Psoas muscle (tissue), 8 donors: ENCODE measurements at regions of chr7 and their contacts with region 1.

Region 1: GRCh38 chr7:151123822-151124464 is 37.7 kb downstream of the AGAP3 start:
- DNase-seq: peak; percentile 83 to 91
- ATAC-seq: peak; percentile 83 to 92 (median 88)
- H3K4me3 ChIP-seq: no peak overlapping the region
- H3K27ac ChIP-seq: no peak overlapping the region
- H3K4me1 ChIP-seq: peaks cover 20% of the 10 kb centered on the region
- H3K27me3 ChIP-seq: no peaks in the 10 kb centered on the region
- CTCF ChIP-seq: peak; percentile 99

Region 2: DNA sequence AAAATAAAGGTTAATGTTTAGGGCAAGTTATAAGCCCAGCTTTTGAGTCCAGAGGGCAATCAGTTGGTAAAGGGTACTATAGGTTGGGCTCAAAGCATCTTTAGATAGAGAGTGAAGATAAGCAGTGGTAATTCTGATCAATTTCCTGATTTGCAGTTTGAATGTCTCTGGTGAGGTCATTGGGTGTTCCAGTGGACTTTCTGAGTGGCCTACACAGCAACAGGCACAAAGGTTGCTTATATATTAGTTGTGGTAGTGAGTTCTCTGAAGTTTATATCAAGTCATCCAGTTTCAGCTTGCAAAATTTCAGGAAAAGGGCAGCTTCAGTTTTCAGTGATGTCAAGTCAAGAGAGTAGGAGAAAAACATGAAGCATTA is 357.6 kb before region 1 on chr7:
- intact Hi-C with region 1: no loop called
- DNase-seq: no peak
- ATAC-seq: no peak
- H3K4me3 ChIP-seq: no peak overlapping the region
- H3K27ac ChIP-seq: no peak overlapping the region
- H3K4me1 ChIP-seq: no peaks in the 10 kb centered on the region
- H3K27me3 ChIP-seq: no peaks in the 10 kb centered on the region
- CTCF ChIP-seq: no peak

Region 3: GRCh38 chr7:151172273-151173141 is 48.6 kb after region 1 on chr7:
- intact Hi-C with region 1: loop called (anchors 1 kb)
- DNase-seq: peak; percentile 78 to 90
- ATAC-seq: peak; percentile 78 to 86 (median 82)
- H3K4me3 ChIP-seq: no peak overlapping the region
- H3K27ac ChIP-seq: no peak overlapping the region
- H3K4me1 ChIP-seq: peaks cover 22% of the 10 kb centered on the region
- H3K27me3 ChIP-seq: no peaks in the 10 kb centered on the region
- CTCF ChIP-seq: peak; percentile 100

Region 4: GRCh38 chr7:151185762-151186631 is 62.1 kb after region 1 on chr7:
- intact Hi-C with region 1: no loop called
- DNase-seq: peak in 1 of 2 donors; percentile 66
- ATAC-seq: peak; percentile 41 to 67 (median 60)
- H3K4me3 ChIP-seq: peak overlapping the region; percentile 67
- H3K27ac ChIP-seq: peak overlapping the region; percentile 97
- H3K4me1 ChIP-seq: peaks cover 33% of the 10 kb centered on the region
- H3K27me3 ChIP-seq: no peaks in the 10 kb centered on the region
- CTCF ChIP-seq: peak; percentile 6

Region 5: DNA sequence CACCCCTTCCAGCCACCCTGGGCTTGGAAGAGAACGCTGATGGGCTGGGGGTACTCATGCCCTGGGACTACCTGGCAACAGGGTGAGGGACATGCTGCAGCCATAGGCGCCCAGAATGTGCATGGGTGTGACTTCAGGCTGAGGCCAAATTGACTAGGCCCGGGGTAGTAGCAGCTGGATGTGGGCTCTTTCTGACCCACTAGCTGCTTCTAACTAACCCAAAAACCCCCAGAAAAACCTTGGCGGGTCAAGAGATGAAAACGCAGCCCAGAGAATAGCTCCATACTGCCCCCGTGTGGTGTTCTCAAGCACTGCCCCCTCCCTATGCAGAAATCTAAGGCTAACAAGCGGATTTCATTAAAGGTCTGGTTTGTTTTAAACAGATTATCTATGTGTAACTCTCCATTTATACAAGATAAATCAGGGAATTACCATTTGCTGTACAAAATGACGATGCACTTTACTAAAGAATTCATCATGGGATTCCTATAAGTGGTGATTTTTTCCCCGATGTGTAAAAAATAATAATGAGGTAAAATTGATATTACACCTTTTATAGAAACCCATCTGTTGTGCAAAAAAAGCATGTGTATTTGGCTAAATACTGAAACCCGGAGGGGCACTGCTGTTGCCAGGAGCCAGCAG is 120.4 kb after region 1 on chr7:
- intact Hi-C with region 1: loop called in 1 of 2 experiments (anchors 5 kb)
- DNase-seq: peak in 1 of 2 donors; percentile 64
- ATAC-seq: no peak
- H3K4me3 ChIP-seq: peak overlapping the region; percentile 88
- H3K27ac ChIP-seq: peak overlapping the region; percentile 100
- H3K4me1 ChIP-seq: peaks cover 40% of the 10 kb centered on the region
- H3K27me3 ChIP-seq: no peaks in the 10 kb centered on the region
- CTCF ChIP-seq: peak; percentile 80

Region 6: GRCh38 chr7:151251328-151251972 is 127.5 kb after region 1 on chr7:
- intact Hi-C with region 1: loop called in 1 of 2 experiments (anchors 5 kb)
- DNase-seq: peak in 1 of 2 donors; percentile 84
- ATAC-seq: peak in 1 of 4 donors; percentile 0
- H3K4me3 ChIP-seq: peak overlapping the region; percentile 88
- H3K27ac ChIP-seq: peak overlapping the region; percentile 100
- H3K4me1 ChIP-seq: peaks cover 31% of the 10 kb centered on the region
- H3K27me3 ChIP-seq: no peaks in the 10 kb centered on the region
- CTCF ChIP-seq: no peak

Region 7: GRCh38 chr7:151271699-151272355 is 147.9 kb after region 1 on chr7:
- intact Hi-C with region 1: no loop called
- DNase-seq: peak; percentile 58 to 81
- ATAC-seq: peak; percentile 47 to 88 (median 78)
- H3K4me3 ChIP-seq: no peak overlapping the region
- H3K27ac ChIP-seq: no peak overlapping the region
- H3K4me1 ChIP-seq: peaks cover 2% of the 10 kb centered on the region
- H3K27me3 ChIP-seq: no peaks in the 10 kb centered on the region
- CTCF ChIP-seq: no peak